ENCODE measurements at regions of chr7 and their contacts with region 1.

Region 1: DNA sequence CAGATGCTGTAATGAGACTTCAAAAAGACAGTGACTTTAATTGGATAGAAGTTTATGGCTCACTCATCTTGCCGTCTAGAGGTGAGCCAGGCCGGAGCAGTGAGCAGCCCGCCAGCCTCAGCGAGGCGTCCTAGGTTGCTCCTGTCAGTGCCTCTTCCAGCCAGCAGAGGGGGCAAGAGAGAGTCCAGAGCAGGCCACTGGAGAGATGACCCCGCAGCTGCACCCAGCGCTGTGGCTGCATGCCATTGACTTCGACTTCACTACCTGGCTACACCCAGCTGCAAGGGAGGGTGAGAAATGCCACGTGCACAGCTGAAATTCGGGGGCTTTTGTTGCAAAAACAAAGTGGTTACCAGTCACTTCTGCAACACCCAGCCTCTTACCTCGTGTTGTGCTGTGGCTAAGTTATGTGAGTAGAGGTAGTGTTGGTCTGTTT is 26.5 kb downstream of the NUB1 start:
- DNase-seq: peak; percentile 85
- ATAC-seq: peak; percentile 96 to 97

Region 2: GRCh38 chr7:151400626-151401315 is 32.6 kb after region 1 on chr7:
- intact Hi-C with region 1: no loop called
- DNase-seq: no peak
- ATAC-seq: no peak

Region 3: DNA sequence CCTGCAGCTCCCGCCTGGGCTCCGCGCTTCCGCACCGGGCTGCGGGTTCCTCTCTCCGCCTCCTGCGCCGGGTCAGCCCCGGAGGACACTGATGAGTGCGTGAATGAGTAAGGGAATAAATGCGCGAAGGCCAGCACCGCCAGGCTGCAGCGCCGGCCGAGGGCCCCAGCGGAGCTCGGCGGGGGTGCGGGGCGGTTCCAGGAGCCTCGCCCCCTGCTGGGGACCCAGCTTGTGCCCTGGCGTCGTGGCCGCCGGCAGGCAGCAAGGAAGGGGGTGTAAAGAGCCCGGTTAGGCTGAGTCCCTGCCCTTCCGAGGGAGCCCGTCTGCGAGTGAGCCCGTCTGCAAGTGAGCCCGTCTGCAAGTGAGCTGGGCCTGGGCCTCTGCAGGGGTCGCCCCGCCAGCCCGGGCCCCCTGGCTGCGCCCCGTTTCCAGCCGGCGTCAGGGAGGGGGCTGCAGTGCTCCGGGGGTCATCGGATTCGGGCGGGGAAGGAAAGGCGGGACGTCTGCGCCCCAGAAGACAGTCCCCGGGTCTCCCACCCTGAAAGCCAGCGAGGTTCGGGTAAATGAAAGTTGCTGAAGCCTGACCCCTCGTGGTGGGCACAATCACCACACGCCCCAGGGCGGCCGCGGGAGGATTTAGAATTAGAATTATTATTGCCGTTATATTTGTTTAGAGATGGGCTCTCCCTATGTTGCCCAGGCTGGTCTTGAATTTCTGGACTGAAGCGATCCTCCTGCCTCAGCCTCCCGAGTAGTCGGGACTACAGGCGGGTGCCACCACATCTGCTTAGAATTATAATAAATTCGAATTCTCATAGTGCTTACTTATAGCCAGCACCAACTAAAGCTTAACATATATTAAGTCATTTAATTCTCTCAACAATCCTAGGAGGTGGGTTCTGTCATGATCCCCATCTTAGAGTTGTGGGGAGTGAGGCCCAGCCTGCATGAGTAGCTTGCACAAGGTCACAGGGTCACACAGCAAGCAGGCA is 80.4 kb after region 1 on chr7:
- intact Hi-C with region 1: loop called (anchors 1 to 5 kb)
- DNase-seq: peak; percentile 74
- ATAC-seq: peak; percentile 90 to 93

Region 4: GRCh38 chr7:151459726-151460473 is 91.7 kb after region 1 on chr7:
- intact Hi-C with region 1: no loop called
- DNase-seq: peak; percentile 86
- ATAC-seq: peak; percentile 84 to 91

Region 5: DNA sequence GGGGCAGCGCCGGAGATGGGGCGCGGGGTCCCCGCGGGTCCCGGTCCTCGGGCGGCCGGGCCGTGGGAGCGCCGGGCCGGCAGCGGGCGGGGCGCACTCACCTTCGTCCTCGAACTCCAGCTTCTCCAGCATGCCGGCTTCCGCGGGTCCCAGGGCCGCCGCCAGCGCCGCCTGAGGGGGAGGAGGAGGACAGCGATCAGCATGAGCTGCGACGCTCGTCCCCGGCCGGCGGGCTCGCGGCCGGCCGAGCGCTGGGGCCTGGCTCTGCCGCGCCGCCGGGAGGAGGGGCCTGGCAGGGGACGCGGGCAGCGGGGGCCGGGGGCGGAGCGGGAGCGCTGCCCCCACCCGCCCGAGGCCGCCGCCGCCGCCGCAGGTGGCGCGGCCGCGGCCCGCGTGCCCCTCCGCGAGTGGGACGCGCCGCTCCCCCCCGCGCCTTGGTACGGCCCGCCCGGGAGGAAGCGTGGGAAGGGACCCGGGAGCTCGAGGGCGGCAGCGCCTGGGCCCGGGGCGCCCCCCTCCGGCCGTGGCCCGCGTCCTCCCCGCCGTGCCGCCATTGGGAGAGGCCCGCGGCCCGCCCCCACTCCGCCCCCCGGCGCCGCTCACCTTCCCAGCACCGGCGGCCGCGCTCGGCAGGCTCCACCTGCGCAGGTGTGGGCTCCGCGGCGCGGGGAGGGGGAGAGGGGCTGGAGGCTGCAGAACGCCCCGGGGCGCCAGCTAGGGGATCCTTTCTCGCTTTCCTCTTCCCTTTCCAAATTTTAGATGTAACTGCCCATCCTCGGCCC is 264.0 kb after region 1 on chr7:
- intact Hi-C with region 1: no loop called
- DNase-seq: peak; percentile 83
- ATAC-seq: peak; percentile 86 to 90

Region 6: GRCh38 chr7:151759591-151760042 is 391.5 kb after region 1 on chr7:
- intact Hi-C with region 1: loop called (anchors 2 to 5 kb)
- DNase-seq: peak; percentile 65
- ATAC-seq: peak; percentile 45 to 59